Activated CD4-positive, alpha-beta T cell treated with anti-CD3 and anti-CD28 coated beads for 36 hours (primary cell): ENCODE measurements at regions of chr12 and their contacts with region 1.

Region 1: DNA sequence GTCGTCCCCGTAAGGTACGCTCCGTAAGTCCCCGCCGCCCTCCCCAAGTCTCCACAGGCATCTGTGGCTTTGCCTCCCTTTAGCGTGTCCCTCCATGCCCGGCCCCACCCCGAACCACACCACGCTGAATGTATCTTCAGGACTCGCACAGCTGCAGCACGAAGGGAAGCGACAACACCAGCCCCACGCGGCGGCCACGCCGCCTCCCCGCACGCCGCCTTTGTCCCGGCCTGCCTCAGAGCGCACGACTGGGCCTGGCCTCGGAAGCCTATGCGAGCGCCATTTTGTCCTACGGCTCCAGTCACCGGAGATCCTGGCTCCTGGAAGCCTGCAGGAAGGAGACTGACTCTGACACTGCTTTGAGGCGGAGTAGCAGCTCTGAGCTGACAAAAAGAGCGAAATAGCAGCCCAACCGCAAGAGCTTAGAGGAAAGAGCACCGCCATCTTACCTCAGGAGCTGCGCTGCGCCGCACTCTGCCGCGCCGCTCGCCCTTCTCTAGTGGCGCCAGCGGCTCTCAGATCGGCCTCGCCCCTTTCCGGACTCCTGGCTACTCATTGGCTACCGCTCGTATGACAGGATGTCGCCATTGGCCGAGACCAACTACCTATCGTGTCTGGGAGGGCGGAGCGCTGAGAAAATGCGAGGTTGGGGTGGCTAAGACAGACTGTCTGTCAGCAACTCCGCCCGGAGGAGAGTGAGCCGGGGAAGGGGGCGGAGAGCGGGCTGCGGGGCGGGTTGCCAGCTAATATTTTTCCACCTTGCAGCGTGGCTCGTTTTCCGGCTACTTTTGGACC is at the start of gene KANSL2:
- DNase-seq: peak; percentile 99
- ATAC-seq: peak; percentile 96
- H3K4me3 Mint-ChIP-seq: peak within 1 kb of the TSS; percentile 87
- H3K27ac Mint-ChIP-seq: peak within 1 kb of the TSS; percentile 91
- H3K4me1 Mint-ChIP-seq: peaks cover 41% of the 10 kb centered on the region
- H3K27me3 Mint-ChIP-seq: no peaks in the 10 kb centered on the region
- total RNA-seq, gene KANSL2: 44.0 to 59.8 TPM

Region 2: GRCh38 chr12:48592591-48593088 is 89.3 kb before region 1 on chr12:
- CTCF ChIA-PET with region 1: no interaction called
- POLR2A ChIA-PET with region 1: no interaction called
- intact Hi-C with region 1: no loop called
- DNase-seq: no peak
- ATAC-seq: no peak
- H3K4me3 Mint-ChIP-seq: no peak overlapping the region
- H3K27ac Mint-ChIP-seq: no peak overlapping the region
- H3K4me1 Mint-ChIP-seq: no peaks in the 10 kb centered on the region
- H3K27me3 Mint-ChIP-seq: peaks cover 16% of the 10 kb centered on the region

Region 3: DNA sequence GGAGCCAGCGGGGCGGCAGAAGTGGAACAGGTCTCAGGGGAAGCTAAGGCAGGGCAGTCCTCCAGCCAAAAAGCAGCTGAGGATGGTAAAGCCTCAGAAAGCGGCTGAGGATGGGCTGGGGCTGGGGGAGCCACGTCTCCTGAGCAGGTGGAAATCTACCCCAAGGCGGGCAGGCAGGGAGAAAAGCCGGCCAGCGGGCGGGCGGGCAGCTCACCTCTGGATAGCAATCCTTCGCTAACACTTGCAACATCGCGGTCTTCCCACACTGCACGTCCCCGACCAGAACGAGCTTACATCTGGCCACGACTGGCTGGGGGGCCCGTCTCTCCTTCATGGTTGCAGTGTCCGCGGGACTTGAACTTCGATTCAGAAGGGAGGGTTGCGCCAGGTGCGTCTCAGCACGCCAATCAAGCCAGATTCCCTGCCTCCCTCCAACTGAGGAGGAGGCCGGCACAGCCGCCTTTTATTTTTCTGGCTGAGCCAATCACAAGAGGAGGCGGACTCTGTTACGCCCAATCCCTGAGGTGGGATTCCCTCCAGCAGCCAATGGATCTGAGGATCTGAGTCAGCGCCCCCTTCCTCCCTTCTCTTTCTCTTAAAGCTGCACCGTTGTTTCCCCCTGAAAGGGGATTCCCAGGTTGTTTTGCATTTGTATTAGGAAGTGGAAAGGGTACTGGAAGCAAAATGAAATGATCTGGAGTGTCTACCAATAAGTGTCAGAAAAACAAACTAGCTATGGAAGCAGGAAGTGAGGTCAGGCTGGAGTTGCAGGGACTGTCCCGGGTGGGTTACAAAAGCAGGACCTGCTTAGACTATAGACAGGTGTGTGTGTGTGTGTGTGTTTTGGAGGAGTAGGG is 183.7 kb after region 1 on chr12 and contains the start of gene RND1:
- CTCF ChIA-PET with region 1: no interaction called
- POLR2A ChIA-PET with region 1: no interaction called
- intact Hi-C with region 1: loop called in 1 of 2 experiments (anchors 1 kb)
- DNase-seq: peak; percentile 89
- ATAC-seq: peak; percentile 95
- H3K4me3 Mint-ChIP-seq: peak within 1 kb of the TSS; percentile 74
- H3K27ac Mint-ChIP-seq: peak within 1 kb of the TSS; percentile 85
- H3K4me1 Mint-ChIP-seq: peaks cover 24% of the 10 kb centered on the region
- H3K27me3 Mint-ChIP-seq: peaks cover 33% of the 10 kb centered on the region
- total RNA-seq, gene RND1: 2.2 to 3.3 TPM